ENCODE measurements at regions of chr2 and their contacts with region 1.

Region 1: DNA sequence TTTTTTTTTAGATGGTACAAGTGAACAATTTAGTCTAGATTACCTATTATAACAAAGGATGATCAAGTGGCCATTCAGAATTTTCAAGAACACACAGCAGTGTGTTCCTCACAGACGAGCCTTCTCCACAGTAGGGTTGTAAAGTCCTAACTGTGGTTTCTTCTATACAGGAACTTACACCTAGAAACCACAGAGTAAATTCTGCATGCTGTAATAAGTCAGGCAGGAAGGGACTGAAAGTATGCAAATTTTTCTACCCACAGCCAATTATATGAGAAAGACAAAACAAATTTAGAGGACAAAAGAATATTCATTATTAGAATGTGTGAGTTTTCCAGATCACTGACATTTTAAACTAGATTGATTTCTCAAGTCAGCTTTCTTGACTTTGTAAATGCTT is 99.5 kb downstream of the RBMS1 start:
- DNase-seq: peak in 1 of 2 donors; percentile 73
- ATAC-seq: peak; percentile 89 to 97 (median 92)
- H3K4me3 ChIP-seq: no peak overlapping the region
- H3K4me3 Mint-ChIP-seq: peak overlapping the region; percentile 71
- H3K27ac ChIP-seq: peak overlapping the region; percentile 46
- H3K27ac Mint-ChIP-seq: no peak overlapping the region
- H3K4me1 ChIP-seq: peaks cover 60% of the 10 kb centered on the region
- H3K4me1 Mint-ChIP-seq: peaks cover 59 to 64% of the 10 kb centered on the region in 2 donors
- H3K27me3 ChIP-seq: no peaks in the 10 kb centered on the region
- H3K27me3 Mint-ChIP-seq: no peaks in the 10 kb centered on the region
- CTCF ChIP-seq: no peak

Region 2: GRCh38 chr2:160429248-160430000 is 35.3 kb after region 1 on chr2:
- intact Hi-C with region 1: loop called (anchors 2 kb)
- DNase-seq: peak in 1 of 2 donors; percentile 80
- ATAC-seq: peak; percentile 60 to 64 (median 62)
- H3K4me3 ChIP-seq: no peak overlapping the region
- H3K4me3 Mint-ChIP-seq: peak overlapping the region; percentile 66
- H3K27ac ChIP-seq: peak overlapping the region; percentile 80
- H3K27ac Mint-ChIP-seq: peak overlapping the region; percentile 93 to 95
- H3K4me1 ChIP-seq: peaks cover 6% of the 10 kb centered on the region
- H3K4me1 Mint-ChIP-seq: peaks cover 33 to 36% of the 10 kb centered on the region in 2 donors
- H3K27me3 ChIP-seq: no peaks in the 10 kb centered on the region
- H3K27me3 Mint-ChIP-seq: no peaks in the 10 kb centered on the region
- CTCF ChIP-seq: peak; percentile 74

Region 3: GRCh38 chr2:160752496-160753330 is 358.6 kb after region 1 on chr2:
- intact Hi-C with region 1: no loop called
- DNase-seq: no peak
- ATAC-seq: no peak
- H3K4me3 ChIP-seq: no peak overlapping the region
- H3K4me3 Mint-ChIP-seq: no peak overlapping the region
- H3K27ac ChIP-seq: no peak overlapping the region
- H3K27ac Mint-ChIP-seq: no peak overlapping the region
- H3K4me1 ChIP-seq: no peaks in the 10 kb centered on the region
- H3K4me1 Mint-ChIP-seq: no peaks in the 10 kb centered on the region
- H3K27me3 ChIP-seq: no peaks in the 10 kb centered on the region
- H3K27me3 Mint-ChIP-seq: peaks cover 0 to 3% of the 10 kb centered on the region in 2 donors
- CTCF ChIP-seq: no peak